Ovary (tissue), 10 donors: ENCODE measurements at regions of chr6 and their contacts with region 1.

Region 1: GRCh38 chr6:28167068-28167467 is 25.4 kb downstream of the ZKSCAN8 start:
- DNase-seq: no peak
- H3K4me3 ChIP-seq: no peak overlapping the region
- H3K27ac ChIP-seq: no peak overlapping the region
- H3K4me1 ChIP-seq: no peaks in the 10 kb centered on the region
- H3K27me3 ChIP-seq: no peaks in the 10 kb centered on the region
- CTCF ChIP-seq: no peak
- EP300 ChIP-seq: no peak
- POLR2A ChIP-seq: no peak

Region 2: GRCh38 chr6:28188111-28188979 is 21.3 kb after region 1 on chr6:
- intact Hi-C with region 1: loop called in 1 of 4 experiments (anchors 1 kb)
- DNase-seq: no peak
- H3K4me3 ChIP-seq: no peak overlapping the region
- H3K27ac ChIP-seq: no peak overlapping the region
- H3K4me1 ChIP-seq: no peaks in the 10 kb centered on the region
- H3K27me3 ChIP-seq: no peaks in the 10 kb centered on the region
- CTCF ChIP-seq: no peak
- EP300 ChIP-seq: no peak
- POLR2A ChIP-seq: no peak